ENCODE measurements at regions of chr17 and their contacts with region 1.

Region 1: DNA sequence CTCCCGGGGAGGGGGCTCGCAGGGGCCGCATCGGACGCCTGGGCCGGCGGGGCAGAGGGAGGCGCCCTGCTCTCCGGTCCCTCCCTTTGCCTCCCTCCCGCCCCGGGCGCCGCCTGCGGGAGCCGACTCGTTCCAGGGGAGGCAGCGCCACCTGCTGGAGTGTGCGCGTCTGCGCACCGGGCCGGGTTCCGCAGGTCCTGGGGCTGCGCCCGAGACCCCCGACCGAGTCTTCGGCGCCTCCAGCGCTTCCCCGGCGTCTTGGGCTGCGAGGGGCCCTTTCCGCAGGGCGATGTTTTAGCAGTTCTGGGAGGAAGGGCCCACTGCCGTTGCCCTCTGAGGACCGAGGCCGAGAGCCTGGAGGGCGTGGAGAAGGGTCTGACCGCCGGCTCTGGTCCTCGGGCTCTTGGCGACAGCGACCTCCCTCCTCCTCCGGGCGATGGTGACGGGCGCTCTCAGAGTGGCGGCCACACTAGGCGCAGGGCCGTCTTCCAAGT is 106.3 kb downstream of the SEC14L1 start:
- DNase-seq: no peak
- H3K4me3 ChIP-seq: peak overlapping the region; percentile 64
- CTCF ChIP-seq: peak; percentile 97

Region 2: GRCh38 chr17:77186141-77186604 is 60.9 kb before region 1 on chr17:
- CTCF ChIA-PET with region 1: no interaction called
- POLR2A ChIA-PET with region 1: no interaction called
- DNase-seq: no peak
- H3K4me3 ChIP-seq: no peak overlapping the region
- CTCF ChIP-seq: no peak

Region 3: GRCh38 chr17:77223642-77224420 is 23.3 kb before region 1 on chr17:
- CTCF ChIA-PET with region 1: no interaction called
- POLR2A ChIA-PET with region 1: no interaction called
- DNase-seq: no peak
- H3K4me3 ChIP-seq: no peak overlapping the region
- CTCF ChIP-seq: no peak

Region 4: DNA sequence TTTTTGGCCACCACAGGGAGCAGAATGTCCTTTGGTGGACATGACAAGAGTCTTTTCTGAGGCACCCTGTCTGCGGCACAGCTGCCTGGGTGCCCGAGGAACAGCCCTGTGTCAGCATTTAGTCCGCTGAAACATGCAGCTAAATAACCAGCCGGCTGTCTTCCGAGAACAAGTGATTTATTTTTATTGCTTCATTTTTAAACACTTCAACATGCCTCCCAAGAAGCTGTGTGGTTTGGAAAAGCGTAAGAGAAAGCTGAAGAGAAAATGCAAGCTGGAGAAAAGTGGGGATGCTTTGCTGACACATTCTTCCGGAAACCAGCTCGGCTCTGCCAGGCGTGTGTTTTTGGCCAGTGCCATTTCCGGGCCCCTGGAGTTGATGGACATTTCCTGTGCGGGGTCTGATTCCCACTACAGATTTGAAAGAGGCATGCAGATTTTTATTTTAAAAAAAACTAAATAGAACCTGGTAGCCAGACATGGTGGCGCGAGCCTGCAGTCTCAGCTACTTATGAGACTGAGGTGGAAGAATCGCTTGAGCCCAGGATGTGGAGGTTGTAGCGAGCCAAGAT is 11.6 kb before region 1 on chr17:
- CTCF ChIA-PET with region 1: interaction called, 11 read pairs
- POLR2A ChIA-PET with region 1: no interaction called
- DNase-seq: peak; percentile 79
- H3K4me3 ChIP-seq: peak overlapping the region; percentile 53
- CTCF ChIP-seq: no peak

Region 5: GRCh38 chr17:77280304-77280910 is 33.3 kb after region 1 on chr17:
- CTCF ChIA-PET with region 1: no interaction called
- POLR2A ChIA-PET with region 1: no interaction called
- DNase-seq: no peak
- H3K4me3 ChIP-seq: peak overlapping the region; percentile 52
- CTCF ChIP-seq: no peak

Region 6: GRCh38 chr17:77375917-77376651 is 129.0 kb after region 1 on chr17:
- CTCF ChIA-PET with region 1: no interaction called
- POLR2A ChIA-PET with region 1: no interaction called
- DNase-seq: peak; percentile 55
- H3K4me3 ChIP-seq: peak overlapping the region; percentile 79
- CTCF ChIP-seq: no peak

Measured in AG04449 (cell line).